AG04450 (cell line): ENCODE measurements at regions of chr20 and their contacts with region 1.

Region 1: GRCh38 chr20:50744143-50744792 is 12.9 kb downstream of the PARD6B start:
- DNase-seq: peak; percentile 74
- H3K4me3 ChIP-seq: no peak overlapping the region
- H3K27ac ChIP-seq: peak overlapping the region; percentile 69
- H3K27me3 ChIP-seq: no peaks in the 10 kb centered on the region
- CTCF ChIP-seq: peak; percentile 47

Region 2: GRCh38 chr20:50534567-50535551 is 209.4 kb before region 1 on chr20:
- CTCF ChIA-PET with region 1: interaction called, 10 read pairs
- POLR2A ChIA-PET with region 1: no interaction called
- DNase-seq: peak; percentile 58
- H3K4me3 ChIP-seq: no peak overlapping the region
- H3K27ac ChIP-seq: peak overlapping the region; percentile 86
- H3K27me3 ChIP-seq: no peaks in the 10 kb centered on the region
- CTCF ChIP-seq: no peak

Region 3: GRCh38 chr20:50625986-50626677 is 118.1 kb before region 1 on chr20:
- CTCF ChIA-PET with region 1: interaction called, 64 read pairs
- POLR2A ChIA-PET with region 1: no interaction called
- DNase-seq: no peak
- H3K4me3 ChIP-seq: no peak overlapping the region
- H3K27ac ChIP-seq: no peak overlapping the region
- H3K27me3 ChIP-seq: no peaks in the 10 kb centered on the region
- CTCF ChIP-seq: peak; percentile 70

Region 4: GRCh38 chr20:50635667-50636503 is 108.4 kb before region 1 on chr20:
- CTCF ChIA-PET with region 1: interaction called, 13 read pairs
- POLR2A ChIA-PET with region 1: no interaction called
- DNase-seq: no peak
- H3K4me3 ChIP-seq: peak overlapping the region; percentile 31; the same call in 1 of the 2 replicates
- H3K27ac ChIP-seq: peak overlapping the region; percentile 89
- H3K27me3 ChIP-seq: no peaks in the 10 kb centered on the region
- CTCF ChIP-seq: peak; percentile 94